ENCODE measurements at regions of chr15 and their contacts with region 1.

Region 1: GRCh38 chr15:52679232-52680040 is at the start of gene ATOSA:
- DNase-seq: peak; percentile 88
- H3K4me3 Mint-ChIP-seq: peak within 1 kb of the TSS; percentile 98
- H3K27ac Mint-ChIP-seq: peak within 1 kb of the TSS; percentile 94
- H3K4me1 Mint-ChIP-seq: peaks cover 5% of the 10 kb centered on the region
- H3K27me3 Mint-ChIP-seq: no peaks in the 10 kb centered on the region
- CTCF ChIP-seq: no peak
- total RNA-seq, gene ATOSA: 21.3 and 27.6 TPM in 2 replicates

Region 2: DNA sequence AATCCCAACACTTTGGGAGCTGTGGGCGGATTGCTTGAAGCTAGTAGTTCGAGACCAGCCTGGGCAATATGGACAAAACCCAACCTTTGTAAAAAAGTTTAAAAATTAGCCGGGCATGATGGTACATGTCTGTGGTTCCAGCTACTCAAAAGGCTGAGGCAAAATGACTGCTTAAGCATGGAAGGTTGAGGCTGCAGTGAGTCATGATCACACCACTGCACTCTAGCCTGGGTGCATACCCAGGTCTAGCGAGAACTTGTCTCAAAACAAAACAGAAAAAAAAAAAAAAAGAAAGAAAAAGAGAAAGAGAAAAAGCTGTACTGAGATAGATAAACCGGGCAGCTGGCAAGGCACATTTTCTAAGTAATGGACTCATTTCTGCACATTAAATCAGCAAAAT is 121.2 kb before region 1 on chr15:
- CTCF ChIA-PET with region 1: interaction called, 3 read pairs
- POLR2A ChIA-PET with region 1: interaction called, 12 read pairs
- intact Hi-C with region 1: no loop called
- DNase-seq: peak; percentile 86
- H3K4me3 Mint-ChIP-seq: peak overlapping the region; percentile 61
- H3K27ac Mint-ChIP-seq: peak overlapping the region; percentile 88
- H3K4me1 Mint-ChIP-seq: peaks cover 41% of the 10 kb centered on the region
- H3K27me3 Mint-ChIP-seq: no peaks in the 10 kb centered on the region
- CTCF ChIP-seq: no peak

Region 3: DNA sequence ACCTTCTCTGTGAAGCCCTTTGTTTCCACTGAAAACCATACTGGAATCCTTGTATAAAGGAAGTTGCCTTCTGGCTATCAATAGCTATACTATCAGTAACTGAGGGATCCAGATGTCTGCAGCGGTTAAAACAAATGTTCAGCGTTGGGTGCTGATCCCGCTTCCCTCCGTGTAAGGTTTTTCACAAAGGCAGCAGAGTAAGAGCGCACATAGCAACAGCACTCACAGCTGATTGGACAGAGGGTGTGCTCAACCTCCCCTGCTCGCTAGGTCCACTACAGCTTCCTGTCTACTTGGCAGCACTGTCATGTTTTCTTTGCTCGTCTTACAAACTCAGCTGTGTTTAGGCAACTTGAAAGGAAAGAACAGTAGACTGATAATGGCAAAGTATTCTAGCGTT is 27.6 kb before region 1 on chr15:
- CTCF ChIA-PET with region 1: interaction called, 6 read pairs
- POLR2A ChIA-PET with region 1: interaction called, 116 read pairs
- intact Hi-C with region 1: loop called (anchors 2 kb)
- DNase-seq: peak; percentile 90
- H3K4me3 Mint-ChIP-seq: peak overlapping the region; percentile 61
- H3K27ac Mint-ChIP-seq: peak overlapping the region; percentile 94
- H3K4me1 Mint-ChIP-seq: peaks cover 38% of the 10 kb centered on the region
- H3K27me3 Mint-ChIP-seq: no peaks in the 10 kb centered on the region
- CTCF ChIP-seq: no peak

Region 4: GRCh38 chr15:52695183-52695582 is 15.7 kb after region 1 on chr15:
- CTCF ChIA-PET with region 1: interaction called, 3 read pairs
- POLR2A ChIA-PET with region 1: interaction called, 17 read pairs
- intact Hi-C with region 1: no loop called
- DNase-seq: no peak
- H3K4me3 Mint-ChIP-seq: no peak overlapping the region
- H3K27ac Mint-ChIP-seq: no peak overlapping the region
- H3K4me1 Mint-ChIP-seq: no peaks in the 10 kb centered on the region
- H3K27me3 Mint-ChIP-seq: no peaks in the 10 kb centered on the region
- CTCF ChIP-seq: no peak

Region 5: GRCh38 chr15:52735231-52736089 is 56.0 kb after region 1 on chr15:
- CTCF ChIA-PET with region 1: interaction called, 4 read pairs
- POLR2A ChIA-PET with region 1: interaction called, 80 read pairs
- intact Hi-C with region 1: loop called (anchors 2 kb)
- DNase-seq: peak; percentile 81
- H3K4me3 Mint-ChIP-seq: no peak overlapping the region
- H3K27ac Mint-ChIP-seq: no peak overlapping the region
- H3K4me1 Mint-ChIP-seq: peaks cover 1% of the 10 kb centered on the region
- H3K27me3 Mint-ChIP-seq: no peaks in the 10 kb centered on the region
- CTCF ChIP-seq: peak; percentile 81

Measured in MCF 10A (cell line).